H1 (cell line): ENCODE measurements at regions of chr4 and their contacts with region 1.

Region 1: DNA sequence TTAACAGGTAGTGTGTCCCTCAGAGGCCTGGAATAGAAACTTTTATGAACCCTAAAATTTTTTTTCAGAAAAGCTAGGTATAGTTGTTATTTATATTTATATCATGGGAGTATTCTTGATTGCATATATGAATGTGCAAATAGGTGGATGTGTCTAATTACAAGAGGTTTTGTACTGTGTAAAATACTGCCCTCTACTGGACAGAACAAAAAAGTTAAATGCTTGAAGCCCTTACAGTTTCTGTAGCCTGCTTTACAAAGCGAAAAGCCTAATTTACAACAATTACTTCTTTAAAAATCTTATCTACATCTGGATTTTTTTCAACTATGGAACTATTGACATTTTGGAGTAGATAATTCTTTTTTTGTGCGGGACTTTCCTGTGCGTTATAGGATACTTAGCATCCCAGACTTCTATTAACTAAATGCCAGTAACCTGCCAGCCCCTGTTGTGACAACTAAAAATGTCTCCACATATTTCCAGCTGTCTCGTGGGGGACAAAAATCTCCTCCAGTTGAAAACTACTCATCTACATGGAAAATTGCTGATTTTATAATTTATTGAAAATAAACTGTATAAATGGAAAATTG is 35.1 kb downstream of the ENPEP start:
- DNase-seq: no peak
- H3K4me3 ChIP-seq: no peak overlapping the region
- H3K27ac ChIP-seq: no peak overlapping the region
- H3K4me1 ChIP-seq: no peaks in the 10 kb centered on the region
- H3K27me3 ChIP-seq: no peaks in the 10 kb centered on the region
- CTCF ChIP-seq: peak in 2 of 3 experiments; percentile 47 to 56; a peak in 2 of 4 replicates
- EP300 ChIP-seq: no peak
- POLR2A ChIP-seq: no peak
- RAD21 ChIP-seq: peak; percentile 64 to 68

Region 2: DNA sequence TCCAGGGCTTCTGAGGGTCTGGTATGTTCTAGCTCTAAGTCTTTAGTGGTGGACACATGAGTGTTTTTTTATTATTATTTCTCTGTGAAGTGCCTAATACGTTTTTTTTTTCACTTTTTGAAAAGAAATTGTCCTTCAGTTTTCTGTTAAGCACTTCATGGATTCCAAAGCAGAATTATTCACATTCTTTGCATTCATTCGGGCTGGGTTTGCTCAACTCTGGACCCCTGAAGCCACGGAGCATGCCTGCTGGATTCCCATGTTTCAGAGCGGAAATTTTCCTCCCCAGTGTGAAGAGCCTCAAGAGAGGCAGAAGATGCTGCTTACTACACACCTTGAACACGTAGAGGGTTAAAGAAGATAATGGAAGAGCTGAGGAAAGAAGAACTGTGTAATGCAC is 490.9 kb before region 1 on chr4:
- CTCF ChIA-PET with region 1: interaction called, 11 read pairs
- POLR2A ChIA-PET with region 1: no interaction called
- DNase-seq: no peak
- H3K4me3 ChIP-seq: no peak overlapping the region
- H3K27ac ChIP-seq: no peak overlapping the region
- H3K4me1 ChIP-seq: peaks cover 0 to 3% (median 0%) of the 10 kb centered on the region in 4 experiments; a peak in 2 of 7 replicates
- H3K27me3 ChIP-seq: no peaks in the 10 kb centered on the region
- CTCF ChIP-seq: no peak
- EP300 ChIP-seq: no peak
- POLR2A ChIP-seq: no peak
- RAD21 ChIP-seq: no peak

Region 3: DNA sequence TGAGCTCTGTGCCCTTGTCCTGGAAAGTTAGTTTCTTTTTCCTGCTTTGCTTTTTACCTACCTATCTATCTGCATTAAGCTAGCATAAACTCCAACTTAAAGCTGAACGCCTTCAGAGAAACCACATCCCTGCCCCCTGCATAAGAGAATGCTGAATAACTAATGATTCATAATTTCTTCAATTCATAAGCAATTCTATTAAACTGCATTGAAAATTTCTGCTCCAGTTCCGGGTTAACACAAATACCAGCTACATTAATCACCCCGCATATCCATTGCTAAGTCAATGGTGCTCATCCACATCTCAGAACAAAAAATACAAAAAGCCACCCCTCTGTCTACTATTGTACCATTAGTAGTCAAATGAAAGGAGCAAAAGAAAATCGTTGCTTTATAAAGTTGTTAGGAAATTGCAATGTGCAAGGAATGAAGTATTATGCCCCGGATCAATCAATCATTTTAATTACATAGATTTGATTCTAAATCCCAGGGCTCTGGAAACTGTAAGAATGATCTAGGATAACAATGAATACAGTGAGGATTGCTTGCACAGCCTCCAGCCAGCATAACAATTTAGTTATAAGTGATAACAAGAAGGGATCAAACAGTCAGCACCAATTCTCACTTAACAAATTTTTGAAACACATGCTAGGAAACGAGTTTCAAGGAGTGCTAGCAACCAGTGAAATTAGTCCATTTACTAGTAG is 419.5 kb before region 1 on chr4:
- CTCF ChIA-PET with region 1: no interaction called
- POLR2A ChIA-PET with region 1: no interaction called
- DNase-seq: no peak
- H3K4me3 ChIP-seq: no peak overlapping the region
- H3K27ac ChIP-seq: no peak overlapping the region
- H3K4me1 ChIP-seq: peaks cover 1 to 12% (median 4%) of the 10 kb centered on the region in 4 experiments; a peak in 3 of 7 replicates
- H3K27me3 ChIP-seq: no peaks in the 10 kb centered on the region
- CTCF ChIP-seq: no peak
- EP300 ChIP-seq: no peak
- POLR2A ChIP-seq: no peak
- RAD21 ChIP-seq: no peak

Region 4: GRCh38 chr4:110310795-110311194 is 200.3 kb before region 1 on chr4:
- CTCF ChIA-PET with region 1: interaction called, 75 read pairs
- POLR2A ChIA-PET with region 1: no interaction called
- DNase-seq: no peak
- H3K4me3 ChIP-seq: no peak overlapping the region
- H3K27ac ChIP-seq: no peak overlapping the region
- H3K4me1 ChIP-seq: no peaks in the 10 kb centered on the region
- H3K27me3 ChIP-seq: no peaks in the 10 kb centered on the region
- CTCF ChIP-seq: no peak
- EP300 ChIP-seq: no peak
- POLR2A ChIP-seq: no peak
- RAD21 ChIP-seq: no peak

Region 5: DNA sequence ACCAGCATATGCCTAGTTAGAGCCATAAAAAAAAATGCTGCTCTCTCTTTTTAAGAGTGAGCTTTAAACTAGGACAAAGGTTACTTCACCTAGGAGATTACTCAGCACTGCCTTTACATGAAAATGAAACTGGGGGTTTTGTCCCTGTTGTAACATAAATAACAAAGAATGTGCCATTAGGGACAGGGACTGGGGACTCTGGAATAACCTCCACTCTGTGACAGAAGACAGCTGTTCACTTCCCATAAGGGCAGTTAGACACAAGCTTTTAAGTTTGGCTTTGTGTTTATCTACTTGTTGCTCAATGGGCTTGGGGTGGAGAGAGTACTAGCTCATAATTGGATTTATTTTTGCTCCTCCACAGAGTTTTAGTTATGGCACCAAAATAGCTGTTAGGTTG is 23.2 kb before region 1 on chr4:
- CTCF ChIA-PET with region 1: interaction called, 24 read pairs
- POLR2A ChIA-PET with region 1: no interaction called
- DNase-seq: no peak
- H3K4me3 ChIP-seq: peak overlapping the region in 1 of 4 experiments; percentile 36; a peak in 2 of 8 replicates
- H3K27ac ChIP-seq: no peak overlapping the region
- H3K4me1 ChIP-seq: peaks cover 0 to 9% (median under 1%) of the 10 kb centered on the region in 4 experiments; a peak in 3 of 7 replicates
- H3K27me3 ChIP-seq: no peaks in the 10 kb centered on the region
- CTCF ChIP-seq: no peak
- EP300 ChIP-seq: no peak
- POLR2A ChIP-seq: no peak
- RAD21 ChIP-seq: no peak

Region 6: DNA sequence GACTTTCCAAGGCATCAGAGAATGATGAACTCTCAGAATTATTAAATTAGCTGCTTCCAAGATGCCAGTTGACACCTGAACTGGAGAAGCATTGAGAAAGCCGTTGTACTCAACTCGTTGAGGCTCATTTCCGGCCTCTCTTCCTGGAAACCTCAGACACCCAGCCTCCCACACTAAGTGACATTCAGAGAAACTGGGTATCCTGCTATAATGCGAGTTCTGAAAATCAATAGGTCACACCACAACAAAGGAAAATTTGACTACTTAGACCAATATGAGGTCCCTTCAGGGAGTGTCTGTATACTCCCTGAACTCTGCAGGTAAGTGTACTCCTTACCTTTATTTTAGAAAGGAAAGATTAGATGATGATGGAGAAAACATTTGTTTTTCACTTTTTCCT is 16.1 kb after region 1 on chr4:
- CTCF ChIA-PET with region 1: interaction called, 16 read pairs
- POLR2A ChIA-PET with region 1: no interaction called
- DNase-seq: no peak
- H3K4me3 ChIP-seq: no peak overlapping the region
- H3K27ac ChIP-seq: no peak overlapping the region
- H3K4me1 ChIP-seq: no peaks in the 10 kb centered on the region
- H3K27me3 ChIP-seq: no peaks in the 10 kb centered on the region
- CTCF ChIP-seq: no peak
- EP300 ChIP-seq: no peak
- POLR2A ChIP-seq: no peak
- RAD21 ChIP-seq: no peak